Activated CD8-positive, alpha-beta T cell treated with anti-CD3 and anti-CD28 coated beads for 36 hours (primary cell): ENCODE measurements at regions of chr20 and their contacts with region 1.

Region 1: DNA sequence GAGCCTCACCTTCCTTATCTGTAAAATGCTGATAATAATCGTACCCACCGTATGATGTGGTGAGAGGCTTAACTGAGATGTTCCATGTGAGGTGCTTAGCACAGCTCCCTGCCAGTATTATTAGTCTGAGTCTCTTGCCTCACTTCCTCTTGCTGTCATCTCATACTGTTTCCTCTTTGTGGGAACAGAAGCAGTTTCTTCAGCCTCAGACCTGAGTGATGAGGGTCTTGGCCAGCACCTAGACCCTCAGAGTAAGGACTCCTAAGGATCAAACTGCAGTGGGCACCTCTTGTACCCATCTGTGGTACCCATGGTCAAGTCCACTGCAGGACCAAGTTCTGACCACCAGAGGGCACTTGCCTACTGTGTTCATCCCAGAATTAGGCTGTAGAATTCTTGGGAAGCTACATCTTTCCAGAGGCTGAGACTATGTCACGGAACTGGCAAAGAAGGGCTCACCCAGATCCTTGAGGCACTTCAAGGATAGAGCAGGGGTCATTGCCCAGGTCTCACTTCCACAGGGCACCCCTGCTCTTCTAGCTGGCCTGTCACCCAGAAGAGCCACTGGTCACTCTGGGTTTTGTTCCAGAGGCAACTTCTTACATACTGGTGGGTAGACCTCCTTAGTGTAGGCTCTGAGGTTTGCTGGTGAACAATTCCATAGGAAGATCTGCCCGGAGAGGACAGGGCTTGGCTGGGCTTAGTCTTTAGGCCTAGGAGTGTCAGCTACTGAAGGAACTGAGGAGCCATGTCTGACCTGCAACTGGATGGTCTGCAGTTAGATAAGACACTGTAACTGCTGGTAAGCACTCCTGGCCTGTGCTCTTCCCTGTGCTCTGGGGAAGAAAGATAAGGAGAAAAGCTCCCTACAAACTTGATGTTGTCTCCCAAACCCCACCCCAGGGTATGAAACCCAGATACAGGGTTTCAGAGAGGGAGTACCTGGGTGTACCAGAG is 20.6 kb upstream of the SGK2 start:
- DNase-seq: peak; percentile 66
- ATAC-seq: no peak
- H3K4me3 Mint-ChIP-seq: no peak overlapping the region
- H3K27ac Mint-ChIP-seq: no peak overlapping the region
- H3K4me1 Mint-ChIP-seq: no peaks in the 10 kb centered on the region
- H3K27me3 Mint-ChIP-seq: no peaks in the 10 kb centered on the region
- CTCF ChIP-seq: peak; percentile 93

Region 2: DNA sequence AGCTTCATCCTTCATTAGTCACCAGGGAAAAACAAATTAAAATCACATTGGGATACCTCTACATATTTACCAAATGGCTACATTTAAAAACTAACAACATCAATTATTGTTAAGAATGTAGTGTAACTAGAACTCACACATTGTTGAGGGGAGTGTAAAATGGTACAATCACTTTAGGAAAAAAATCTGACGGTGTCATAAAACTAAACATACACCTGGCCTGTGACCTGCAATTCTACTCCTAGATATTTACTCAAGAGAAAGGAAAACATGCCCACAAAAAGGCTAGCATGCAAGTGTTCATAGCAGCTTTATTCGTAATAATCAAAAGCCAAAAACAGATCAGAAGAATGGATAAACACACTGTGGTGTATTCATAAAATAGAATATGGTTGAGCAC is 113.8 kb before region 1 on chr20:
- CTCF ChIA-PET with region 1: no interaction called
- POLR2A ChIA-PET with region 1: no interaction called
- intact Hi-C with region 1: no loop called
- DNase-seq: no peak
- ATAC-seq: no peak
- H3K4me3 Mint-ChIP-seq: no peak overlapping the region
- H3K27ac Mint-ChIP-seq: no peak overlapping the region
- H3K4me1 Mint-ChIP-seq: no peaks in the 10 kb centered on the region
- H3K27me3 Mint-ChIP-seq: peaks cover 21% of the 10 kb centered on the region
- CTCF ChIP-seq: no peak

Region 3: DNA sequence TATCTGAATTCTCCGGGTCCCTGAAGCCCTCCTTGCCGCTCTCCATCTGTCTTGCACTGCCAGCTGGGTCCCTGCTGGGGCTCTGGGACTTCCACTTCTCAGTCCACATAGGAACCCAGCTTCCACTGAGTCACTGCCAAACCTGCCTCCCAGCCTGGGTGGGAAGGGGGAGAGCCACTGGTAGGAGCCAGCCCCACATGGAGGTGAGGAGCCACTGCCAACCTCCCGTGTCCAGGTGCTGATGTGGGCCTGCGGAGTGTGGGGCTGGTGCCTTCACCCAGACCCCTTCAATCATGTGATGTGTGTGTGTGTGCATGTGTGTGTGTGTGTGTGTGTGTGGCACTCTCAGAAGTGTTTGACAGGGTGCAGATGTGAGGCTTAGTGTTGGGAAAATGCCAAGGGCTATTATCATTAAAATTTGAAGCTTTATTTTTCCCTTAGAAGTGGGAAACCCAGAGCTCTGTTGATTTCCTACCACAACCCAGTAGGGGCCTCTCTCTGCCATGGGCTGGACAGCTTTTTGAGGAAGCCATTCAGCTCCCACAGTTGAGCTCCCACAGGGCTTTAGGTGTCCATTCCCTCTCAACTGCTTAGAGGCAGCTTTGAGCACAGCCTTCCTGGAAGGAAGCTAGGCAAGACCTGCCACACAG is 11.3 kb after region 1 on chr20:
- CTCF ChIA-PET with region 1: interaction called, 19 read pairs
- POLR2A ChIA-PET with region 1: interaction called, 4 read pairs
- intact Hi-C with region 1: no loop called
- DNase-seq: no peak
- ATAC-seq: no peak
- H3K4me3 Mint-ChIP-seq: no peak overlapping the region
- H3K27ac Mint-ChIP-seq: no peak overlapping the region
- H3K4me1 Mint-ChIP-seq: no peaks in the 10 kb centered on the region
- H3K27me3 Mint-ChIP-seq: no peaks in the 10 kb centered on the region
- CTCF ChIP-seq: no peak

Region 4: GRCh38 chr20:43691928-43692524 is 153.8 kb after region 1 on chr20:
- CTCF ChIA-PET with region 1: interaction called, 31 read pairs
- POLR2A ChIA-PET with region 1: no interaction called
- intact Hi-C with region 1: no loop called
- DNase-seq: peak; percentile 79
- ATAC-seq: peak; percentile 75
- H3K4me3 Mint-ChIP-seq: no peak overlapping the region
- H3K27ac Mint-ChIP-seq: no peak overlapping the region
- H3K4me1 Mint-ChIP-seq: peaks cover 6% of the 10 kb centered on the region
- H3K27me3 Mint-ChIP-seq: no peaks in the 10 kb centered on the region
- CTCF ChIP-seq: peak; percentile 79

Region 5: GRCh38 chr20:44092551-44093248 is 554.5 kb after region 1 on chr20:
- CTCF ChIA-PET with region 1: no interaction called
- POLR2A ChIA-PET with region 1: no interaction called
- intact Hi-C with region 1: loop called (anchors 10 kb)
- DNase-seq: peak; percentile 61
- ATAC-seq: peak; percentile 42
- H3K4me3 Mint-ChIP-seq: no peak overlapping the region
- H3K27ac Mint-ChIP-seq: no peak overlapping the region
- H3K4me1 Mint-ChIP-seq: no peaks in the 10 kb centered on the region
- H3K27me3 Mint-ChIP-seq: peaks cover 10% of the 10 kb centered on the region
- CTCF ChIP-seq: peak; percentile 48